ENCODE measurements at regions of chr22 and their contacts with region 1.

Region 1: DNA sequence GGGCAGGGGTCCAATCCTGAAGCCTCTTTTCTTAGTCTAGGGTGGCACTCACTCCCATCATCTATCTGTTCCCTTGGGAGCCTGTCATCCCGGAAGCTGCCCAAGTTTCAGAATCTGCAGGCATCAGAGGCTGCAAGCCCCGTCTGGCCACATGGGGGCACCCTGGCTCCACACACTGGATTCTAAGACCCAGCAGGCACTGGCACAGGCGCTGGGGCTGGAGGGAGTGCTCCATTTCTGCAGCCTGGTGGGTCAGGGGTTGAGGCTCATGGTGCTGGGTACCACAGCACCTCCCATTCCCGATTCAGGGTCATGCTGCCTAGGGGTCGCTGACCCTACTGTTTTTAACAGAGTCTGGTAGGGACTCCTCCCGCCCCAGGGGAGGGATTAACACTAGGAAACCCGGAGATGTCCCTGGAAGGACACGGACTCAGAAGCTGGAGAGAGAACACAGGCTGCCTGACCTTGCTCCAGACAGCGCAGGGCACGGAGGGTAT is 243.9 kb upstream of the SYN3 start:
- DNase-seq: peak; percentile 35
- H3K4me3 Mint-ChIP-seq: no peak overlapping the region
- H3K27ac Mint-ChIP-seq: peak overlapping the region; percentile 17
- H3K4me1 Mint-ChIP-seq: no peaks in the 10 kb centered on the region
- H3K27me3 Mint-ChIP-seq: no peaks in the 10 kb centered on the region
- CTCF ChIP-seq: peak; percentile 97

Region 2: DNA sequence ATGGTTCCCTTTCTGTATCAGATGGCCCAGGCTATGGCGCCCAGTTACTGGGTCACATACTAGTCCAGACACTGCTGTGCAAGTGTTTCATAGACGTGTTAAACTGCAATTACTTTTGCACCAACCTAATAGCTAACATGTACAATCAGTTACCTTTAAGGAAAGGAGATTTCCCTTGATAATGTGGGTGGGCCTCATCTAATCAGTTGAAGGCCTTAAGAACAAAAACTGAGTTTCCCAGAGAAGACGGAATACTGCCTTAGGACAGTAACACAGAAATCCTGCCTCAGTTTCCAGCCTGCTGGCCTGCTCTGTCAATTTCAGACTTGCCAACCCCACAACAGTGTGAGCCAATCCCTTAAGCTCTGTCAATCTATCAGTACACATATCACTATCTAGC is 14.0 kb before region 1 on chr22:
- CTCF ChIA-PET with region 1: interaction called, 24 read pairs
- POLR2A ChIA-PET with region 1: no interaction called
- intact Hi-C with region 1: no loop called
- DNase-seq: no peak
- H3K4me3 Mint-ChIP-seq: no peak overlapping the region
- H3K27ac Mint-ChIP-seq: no peak overlapping the region
- H3K4me1 Mint-ChIP-seq: no peaks in the 10 kb centered on the region
- H3K27me3 Mint-ChIP-seq: no peaks in the 10 kb centered on the region
- CTCF ChIP-seq: no peak

Region 3: GRCh38 chr22:33467620-33468095 is 165.6 kb after region 1 on chr22:
- CTCF ChIA-PET with region 1: interaction called, 3 read pairs
- POLR2A ChIA-PET with region 1: no interaction called
- intact Hi-C with region 1: loop called (anchors 1 kb)
- DNase-seq: no peak
- H3K4me3 Mint-ChIP-seq: no peak overlapping the region
- H3K27ac Mint-ChIP-seq: no peak overlapping the region
- H3K4me1 Mint-ChIP-seq: no peaks in the 10 kb centered on the region
- H3K27me3 Mint-ChIP-seq: no peaks in the 10 kb centered on the region
- CTCF ChIP-seq: peak; percentile 7

Region 4: DNA sequence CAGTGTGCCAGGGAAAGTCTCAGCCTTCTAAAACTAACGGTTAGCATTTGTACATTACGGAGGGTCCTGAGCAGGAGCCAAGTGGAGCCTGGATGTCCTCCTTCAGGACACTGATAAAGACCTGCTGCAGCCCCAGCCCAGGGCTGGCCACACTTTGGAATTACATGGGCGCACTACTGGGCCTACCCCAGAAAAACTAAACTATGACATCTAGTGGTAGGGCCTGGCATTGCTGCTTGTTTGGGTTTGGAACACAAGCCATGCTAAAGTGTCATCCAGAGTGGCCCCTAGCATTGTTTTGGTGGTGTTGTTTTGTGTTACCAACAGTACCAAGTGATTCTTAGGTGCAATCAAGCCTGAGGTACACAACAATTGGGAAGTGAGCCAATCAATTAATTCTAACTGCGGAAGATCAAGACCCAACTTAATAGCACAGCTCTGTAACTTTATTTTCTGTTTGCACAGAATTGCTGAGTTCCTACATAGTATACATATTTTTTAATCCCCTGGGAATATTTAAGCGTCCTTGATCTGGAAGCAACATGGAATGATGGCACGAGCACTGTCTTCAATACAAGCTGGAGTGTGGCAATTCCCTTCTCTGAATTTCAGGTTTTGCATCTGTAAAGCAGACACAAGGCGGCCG is 277.5 kb after region 1 on chr22:
- CTCF ChIA-PET with region 1: interaction called, 109 read pairs
- POLR2A ChIA-PET with region 1: interaction called, 3 read pairs
- intact Hi-C with region 1: loop called (anchors 1 kb)
- DNase-seq: peak; percentile 9
- H3K4me3 Mint-ChIP-seq: no peak overlapping the region
- H3K27ac Mint-ChIP-seq: no peak overlapping the region
- H3K4me1 Mint-ChIP-seq: no peaks in the 10 kb centered on the region
- H3K27me3 Mint-ChIP-seq: no peaks in the 10 kb centered on the region
- CTCF ChIP-seq: peak; percentile 83

Region 5: GRCh38 chr22:35231585-35232084 is 1929.5 kb after region 1 on chr22:
- CTCF ChIA-PET with region 1: interaction called, 3 read pairs
- POLR2A ChIA-PET with region 1: no interaction called
- intact Hi-C with region 1: loop called (anchors 5 kb)
- DNase-seq: peak; percentile 84
- H3K4me3 Mint-ChIP-seq: no peak overlapping the region
- H3K27ac Mint-ChIP-seq: no peak overlapping the region
- H3K4me1 Mint-ChIP-seq: no peaks in the 10 kb centered on the region
- H3K27me3 Mint-ChIP-seq: peaks cover 56% of the 10 kb centered on the region
- CTCF ChIP-seq: peak; percentile 90